CD4-positive, alpha-beta T cell (primary cell): ENCODE measurements at regions of chr11 and their contacts with region 1.

Region 1: DNA sequence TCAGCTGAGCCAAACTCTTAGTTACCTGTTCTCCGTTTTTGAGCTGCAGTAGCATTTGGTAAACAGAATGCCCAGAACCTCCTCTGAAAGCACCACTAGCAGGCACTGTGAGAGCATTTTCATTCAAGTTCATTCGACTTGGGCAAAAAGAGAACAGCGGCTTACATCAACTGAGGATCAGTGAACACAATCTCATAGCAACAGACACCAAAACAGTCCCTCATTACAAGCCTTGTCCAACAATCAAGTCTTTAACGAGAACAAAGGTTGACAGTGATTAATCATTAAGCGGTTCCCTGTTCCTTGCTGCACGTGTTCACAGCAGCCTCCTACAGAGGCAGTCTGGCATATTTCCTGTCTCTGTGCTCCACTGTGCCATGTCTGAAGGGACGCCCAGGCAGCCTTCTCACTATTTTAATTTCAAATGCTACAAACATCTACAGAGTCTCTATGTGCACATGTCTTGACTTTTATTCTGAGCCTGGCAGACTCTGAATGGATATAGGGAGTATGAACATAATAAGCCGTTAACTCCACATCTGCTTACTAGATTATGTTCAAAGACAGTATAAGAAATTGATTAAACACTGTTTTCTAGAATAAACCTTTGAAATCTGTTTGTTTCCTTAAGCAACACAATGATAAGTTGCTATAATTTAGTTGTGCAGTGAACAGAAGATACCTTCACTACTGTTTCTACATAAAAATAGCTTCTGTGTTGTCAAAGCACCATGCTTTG is 88.3 kb upstream of the MTMR2 start:
- DNase-seq: peak; percentile 34 to 89 (median 57)
- ATAC-seq: peak; percentile 75
- H3K4me3 ChIP-seq: peak overlapping the region; percentile 24
- H3K4me3 Mint-ChIP-seq: peak overlapping the region; percentile 54
- H3K27ac ChIP-seq: peak overlapping the region; percentile 10 to 82
- H3K27ac Mint-ChIP-seq: no peak overlapping the region
- H3K4me1 ChIP-seq: peaks cover 33% of the 10 kb centered on the region
- H3K4me1 Mint-ChIP-seq: peaks cover 21% of the 10 kb centered on the region
- H3K27me3 ChIP-seq: no peaks in the 10 kb centered on the region
- H3K27me3 Mint-ChIP-seq: no peaks in the 10 kb centered on the region
- CTCF ChIP-seq: peak; percentile 39

Region 2: GRCh38 chr11:95371153-95371552 is 641.1 kb before region 1 on chr11:
- CTCF ChIA-PET with region 1: no interaction called
- POLR2A ChIA-PET with region 1: no interaction called
- intact Hi-C with region 1: no loop called
- DNase-seq: peak in 2 of 14 experiments; percentile 12 to 19
- ATAC-seq: no peak
- H3K4me3 ChIP-seq: no peak overlapping the region
- H3K4me3 Mint-ChIP-seq: no peak overlapping the region
- H3K27ac ChIP-seq: no peak overlapping the region
- H3K27ac Mint-ChIP-seq: no peak overlapping the region
- H3K4me1 ChIP-seq: no peaks in the 10 kb centered on the region
- H3K4me1 Mint-ChIP-seq: no peaks in the 10 kb centered on the region
- H3K27me3 ChIP-seq: no peaks in the 10 kb centered on the region
- H3K27me3 Mint-ChIP-seq: no peaks in the 10 kb centered on the region
- CTCF ChIP-seq: no peak

Region 3: DNA sequence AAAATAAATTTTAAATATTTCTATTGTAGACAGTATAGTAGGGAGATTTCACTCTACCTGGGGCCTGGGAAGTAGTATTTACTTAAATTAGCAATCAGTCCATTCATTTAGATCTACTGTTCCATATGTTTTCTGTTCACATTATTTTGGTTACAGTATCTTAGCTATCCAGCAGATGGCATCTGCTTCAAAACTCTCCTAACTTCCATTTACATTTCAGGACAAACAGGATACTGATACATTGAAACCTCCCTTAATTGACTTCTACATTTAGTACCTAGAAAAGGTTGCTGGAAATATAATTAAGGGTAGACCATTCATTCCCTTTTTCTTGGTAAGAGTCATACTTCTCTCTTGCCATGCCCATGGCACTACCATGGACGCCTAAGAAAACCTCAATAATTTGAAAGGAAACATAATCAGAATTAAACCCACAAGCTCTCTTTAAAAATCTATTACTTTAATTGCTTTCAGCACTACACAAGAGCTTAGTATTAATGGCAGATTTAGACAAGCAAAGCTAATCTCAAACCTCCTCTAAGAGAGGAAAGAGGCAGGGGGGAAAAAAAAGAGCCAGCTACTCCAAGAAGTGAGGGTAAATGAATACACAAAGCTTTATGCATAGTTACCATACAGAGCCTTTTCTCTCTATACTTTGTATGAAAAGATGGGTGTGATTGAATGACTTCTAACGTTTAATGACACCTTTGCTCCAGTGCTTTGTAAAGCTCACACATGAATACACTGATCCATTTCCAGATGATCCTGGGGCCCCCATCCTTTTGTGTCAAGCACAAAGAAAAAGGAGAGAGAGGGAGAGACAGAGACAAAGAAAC is 42.8 kb after region 1 on chr11:
- CTCF ChIA-PET with region 1: interaction called, 12 read pairs
- POLR2A ChIA-PET with region 1: no interaction called
- intact Hi-C with region 1: loop called in 1 of 2 experiments (anchors 2 kb)
- DNase-seq: peak in 3 of 14 experiments; percentile 55 to 57 (median 57)
- ATAC-seq: peak; percentile 76
- H3K4me3 ChIP-seq: no peak overlapping the region
- H3K4me3 Mint-ChIP-seq: no peak overlapping the region
- H3K27ac ChIP-seq: no peak overlapping the region
- H3K27ac Mint-ChIP-seq: peak overlapping the region; percentile 26
- H3K4me1 ChIP-seq: peaks cover 2% of the 10 kb centered on the region
- H3K4me1 Mint-ChIP-seq: peaks cover 83% of the 10 kb centered on the region
- H3K27me3 ChIP-seq: no peaks in the 10 kb centered on the region
- H3K27me3 Mint-ChIP-seq: no peaks in the 10 kb centered on the region
- CTCF ChIP-seq: peak; percentile 65